Calu3 (cell line): ENCODE measurements at regions of chr19 and their contacts with region 1.

Region 1: GRCh38 chr19:4803736-4804695 is 12.5 kb downstream of the FEM1A start:
- DNase-seq: peak; percentile 77
- H3K4me3 Mint-ChIP-seq: no peak overlapping the region
- H3K27ac Mint-ChIP-seq: no peak overlapping the region
- H3K4me1 Mint-ChIP-seq: no peaks in the 10 kb centered on the region
- H3K27me3 Mint-ChIP-seq: no peaks in the 10 kb centered on the region
- CTCF ChIP-seq: peak; percentile 75

Region 2: DNA sequence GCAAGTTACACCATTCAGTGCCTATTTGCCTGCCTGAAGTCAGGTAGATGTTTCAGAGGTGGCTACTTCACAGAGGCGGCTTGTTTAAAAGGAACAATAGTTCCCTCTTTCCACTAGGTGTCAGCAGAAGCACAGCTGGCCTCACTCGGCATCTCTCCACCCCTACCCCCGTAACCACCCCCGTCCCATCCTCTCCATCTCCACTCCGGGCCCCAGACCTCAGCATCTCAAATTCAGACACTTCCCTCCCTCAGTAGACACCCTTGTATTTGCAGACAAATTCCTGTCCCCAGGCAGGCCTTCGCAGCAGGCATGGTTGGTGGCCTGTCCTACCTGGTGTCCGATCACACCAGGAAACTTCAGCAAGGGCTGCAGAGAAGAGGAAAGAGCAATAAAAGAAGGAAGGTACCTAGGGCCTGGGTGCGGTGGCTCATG is 71.3 kb before region 1 on chr19:
- CTCF ChIA-PET with region 1: no interaction called
- intact Hi-C with region 1: loop called (anchors 2 kb)
- DNase-seq: peak; percentile 43
- H3K4me3 Mint-ChIP-seq: no peak overlapping the region
- H3K27ac Mint-ChIP-seq: no peak overlapping the region
- H3K4me1 Mint-ChIP-seq: peaks cover 9% of the 10 kb centered on the region
- H3K27me3 Mint-ChIP-seq: peaks cover 30% of the 10 kb centered on the region
- CTCF ChIP-seq: peak; percentile 50

Region 3: DNA sequence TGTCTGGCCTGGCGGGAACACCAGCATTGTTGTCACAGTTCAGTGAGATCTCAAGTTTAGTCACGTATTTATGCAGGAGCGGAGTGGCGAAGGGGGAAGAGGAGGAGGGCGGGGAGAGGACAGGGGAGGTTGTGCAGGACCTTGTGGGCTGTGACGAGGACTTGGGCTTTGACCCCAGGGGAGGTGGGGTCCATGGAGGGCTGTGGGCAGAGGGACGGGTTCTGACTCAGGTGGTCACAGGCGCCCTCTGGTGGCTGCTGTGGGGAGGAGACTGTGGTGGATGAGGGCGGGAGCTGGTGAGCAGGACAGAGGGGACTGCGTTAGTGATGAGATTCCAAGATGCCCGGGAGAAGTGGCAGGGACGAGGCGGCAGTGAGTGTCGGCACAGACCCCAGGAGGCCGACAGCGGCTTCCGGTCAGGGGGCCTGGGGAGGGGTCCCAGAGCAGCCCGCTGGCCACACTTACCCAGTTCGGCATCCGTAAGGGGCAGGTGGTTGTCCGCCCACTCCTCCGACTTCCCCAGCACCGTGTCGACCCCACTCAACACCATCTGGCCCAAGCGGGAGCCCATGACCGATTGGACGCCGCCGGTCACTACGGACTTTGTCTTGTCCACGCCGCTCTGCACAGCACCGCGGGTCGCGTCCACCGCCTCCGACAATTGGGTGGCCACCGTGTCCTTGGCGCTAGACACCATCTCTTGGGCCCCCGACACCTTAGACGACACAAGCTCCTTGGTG is 47.7 kb after region 1 on chr19:
- CTCF ChIA-PET with region 1: interaction called, 20 read pairs
- intact Hi-C with region 1: loop called (anchors 10 kb)
- DNase-seq: peak; percentile 61
- H3K4me3 Mint-ChIP-seq: no peak overlapping the region
- H3K27ac Mint-ChIP-seq: no peak overlapping the region
- H3K4me1 Mint-ChIP-seq: no peaks in the 10 kb centered on the region
- H3K27me3 Mint-ChIP-seq: no peaks in the 10 kb centered on the region
- CTCF ChIP-seq: peak; percentile 51